Prostate gland (tissue), 2 donors: ENCODE measurements at regions of chr2 and their contacts with region 1.

Region 1: GRCh38 chr2:191026377-191026776 is 12.4 kb upstream of the STAT1 start:
- DNase-seq: no peak
- H3K4me3 ChIP-seq: no peak overlapping the region
- H3K27ac ChIP-seq: no peak overlapping the region
- H3K4me1 ChIP-seq: no peaks in the 10 kb centered on the region
- H3K27me3 ChIP-seq: no peaks in the 10 kb centered on the region
- CTCF ChIP-seq: no peak
- POLR2A ChIP-seq: no peak

Region 2: DNA sequence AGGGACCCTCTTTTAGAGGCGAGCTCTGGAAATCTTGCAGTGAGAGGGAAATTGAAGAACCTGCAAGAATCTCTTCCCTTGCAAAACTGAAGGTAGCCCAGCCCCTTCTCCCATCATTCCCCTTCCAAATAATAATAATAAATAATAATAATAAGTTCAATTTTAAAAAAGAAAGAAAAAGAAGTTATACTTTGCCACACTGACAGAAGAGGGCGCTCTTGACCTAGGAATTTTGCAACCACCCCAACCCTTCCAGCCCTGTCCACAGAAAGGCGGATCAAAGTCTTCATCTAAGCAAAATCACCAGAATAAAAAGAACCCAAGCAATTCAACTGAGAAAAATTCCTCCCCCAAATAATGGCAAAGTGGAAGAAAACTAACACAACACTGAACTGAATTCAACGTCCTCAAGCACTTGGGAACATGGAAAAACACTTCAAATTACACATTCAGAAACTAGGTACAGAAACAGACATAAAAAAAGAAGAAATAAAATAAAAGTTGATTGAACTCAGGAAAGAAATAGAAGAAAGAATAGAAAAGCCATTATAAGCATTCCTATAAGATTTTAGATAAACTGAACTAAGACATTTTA is 244.7 kb before region 1 on chr2:
- intact Hi-C with region 1: loop called (anchors 5 kb)
- DNase-seq: peak; percentile 16
- H3K4me3 ChIP-seq: no peak overlapping the region
- H3K27ac ChIP-seq: no peak overlapping the region
- H3K4me1 ChIP-seq: no peaks in the 10 kb centered on the region
- H3K27me3 ChIP-seq: no peaks in the 10 kb centered on the region
- CTCF ChIP-seq: peak; percentile 28 to 69 (median 44)
- POLR2A ChIP-seq: no peak